ENCODE measurements at regions of chr5 and their contacts with region 1.

Region 1: GRCh38 chr5:151002250-151002649 is 18.1 kb upstream of the GPX3 start:
- DNase-seq: no peak
- H3K4me3 ChIP-seq: no peak overlapping the region
- H3K27ac ChIP-seq: no peak overlapping the region
- H3K4me1 ChIP-seq: peaks cover 49 to 68% (median 64%) of the 10 kb centered on the region in 4 donors
- H3K27me3 ChIP-seq: no peaks in the 10 kb centered on the region
- CTCF ChIP-seq: peak; percentile 51 to 68 (median 66)
- EP300 ChIP-seq: no peak
- POLR2A ChIP-seq: no peak

Region 2: GRCh38 chr5:150783422-150783928 is 218.8 kb before region 1 on chr5:
- intact Hi-C with region 1: loop called (anchors 10 kb)
- DNase-seq: no peak
- H3K4me3 ChIP-seq: peak overlapping the region in 3 of 4 donors; percentile 11 to 25 (median 18)
- H3K27ac ChIP-seq: peak overlapping the region; percentile 90 to 95 (median 93)
- H3K4me1 ChIP-seq: peaks cover 55 to 74% (median 61%) of the 10 kb centered on the region in 4 donors
- H3K27me3 ChIP-seq: no peaks in the 10 kb centered on the region
- CTCF ChIP-seq: no peak
- EP300 ChIP-seq: no peak
- POLR2A ChIP-seq: no peak

Region 3: GRCh38 chr5:151115274-151115905 is 113.1 kb after region 1 on chr5:
- intact Hi-C with region 1: loop called (anchors 2 kb)
- DNase-seq: no peak
- H3K4me3 ChIP-seq: no peak overlapping the region
- H3K27ac ChIP-seq: peak overlapping the region in 1 of 4 donors; percentile 16
- H3K4me1 ChIP-seq: peaks cover 8 to 32% (median 25%) of the 10 kb centered on the region in 4 donors
- H3K27me3 ChIP-seq: no peaks in the 10 kb centered on the region
- CTCF ChIP-seq: peak; percentile 95 to 98 (median 95)
- EP300 ChIP-seq: no peak
- POLR2A ChIP-seq: no peak